K562 (cell line): ENCODE measurements at regions of chr18 and their contacts with region 1.

Region 1: GRCh38 chr18:55731594-55732042 is 143.6 kb upstream of the TCF4 start:
- DNase-seq: peak; percentile 42 to 64 (median 56)
- ATAC-seq: peak; percentile 80
- H3K4me3 ChIP-seq: no peak overlapping the region; the same call in 1 of the 2 replicates
- H3K27ac ChIP-seq: peak overlapping the region; percentile 77
- H3K4me1 ChIP-seq: peaks cover 0 to 34% of the 10 kb centered on the region in 2 experiments; a peak in 2 of 5 replicates
- H3K27me3 ChIP-seq: no peaks in the 10 kb centered on the region
- CTCF ChIP-seq: no peak
- EP300 ChIP-seq: peak; percentile 21; the same call in 1 of the 2 replicates
- POLR2A ChIP-seq: no peak
- RAD21 ChIP-seq: no peak

Region 2: GRCh38 chr18:55748227-55748738 is 16.7 kb after region 1 on chr18:
- CTCF ChIA-PET with region 1: no interaction called
- POLR2A ChIA-PET with region 1: interaction called, 7 read pairs
- in situ Hi-C with region 1: no loop called
- intact Hi-C with region 1: loop called (anchors 1 kb)
- DNase-seq: peak; percentile 71 to 92 (median 80)
- ATAC-seq: peak; percentile 99
- H3K4me3 ChIP-seq: no peak overlapping the region
- H3K27ac ChIP-seq: peak overlapping the region; percentile 55; the same call in 2 of the 3 replicates
- H3K4me1 ChIP-seq: peaks cover 16 to 31% of the 10 kb centered on the region in 2 experiments; a peak in 3 of 5 replicates
- H3K27me3 ChIP-seq: no peaks in the 10 kb centered on the region
- CTCF ChIP-seq: no peak
- EP300 ChIP-seq: peak; percentile 97
- POLR2A ChIP-seq: no peak
- RAD21 ChIP-seq: peak in 1 of 2 experiments; percentile 9; a peak in 1 of 4 replicates

Region 3: GRCh38 chr18:55886886-55887285 is 155.3 kb after region 1 on chr18:
- CTCF ChIA-PET with region 1: no interaction called
- POLR2A ChIA-PET with region 1: no interaction called
- in situ Hi-C with region 1: no loop called
- intact Hi-C with region 1: no loop called
- DNase-seq: no peak
- ATAC-seq: no peak
- H3K4me3 ChIP-seq: no peak overlapping the region
- H3K27ac ChIP-seq: no peak overlapping the region
- H3K4me1 ChIP-seq: no peaks in the 10 kb centered on the region
- H3K27me3 ChIP-seq: peaks cover 0 to 3% of the 10 kb centered on the region in 2 experiments; a peak in 1 of 5 replicates
- CTCF ChIP-seq: no peak
- EP300 ChIP-seq: no peak
- POLR2A ChIP-seq: no peak
- RAD21 ChIP-seq: no peak